Mammary epithelial cell (primary cell): ENCODE measurements at regions of chr1 and their contacts with region 1.

Region 1: DNA sequence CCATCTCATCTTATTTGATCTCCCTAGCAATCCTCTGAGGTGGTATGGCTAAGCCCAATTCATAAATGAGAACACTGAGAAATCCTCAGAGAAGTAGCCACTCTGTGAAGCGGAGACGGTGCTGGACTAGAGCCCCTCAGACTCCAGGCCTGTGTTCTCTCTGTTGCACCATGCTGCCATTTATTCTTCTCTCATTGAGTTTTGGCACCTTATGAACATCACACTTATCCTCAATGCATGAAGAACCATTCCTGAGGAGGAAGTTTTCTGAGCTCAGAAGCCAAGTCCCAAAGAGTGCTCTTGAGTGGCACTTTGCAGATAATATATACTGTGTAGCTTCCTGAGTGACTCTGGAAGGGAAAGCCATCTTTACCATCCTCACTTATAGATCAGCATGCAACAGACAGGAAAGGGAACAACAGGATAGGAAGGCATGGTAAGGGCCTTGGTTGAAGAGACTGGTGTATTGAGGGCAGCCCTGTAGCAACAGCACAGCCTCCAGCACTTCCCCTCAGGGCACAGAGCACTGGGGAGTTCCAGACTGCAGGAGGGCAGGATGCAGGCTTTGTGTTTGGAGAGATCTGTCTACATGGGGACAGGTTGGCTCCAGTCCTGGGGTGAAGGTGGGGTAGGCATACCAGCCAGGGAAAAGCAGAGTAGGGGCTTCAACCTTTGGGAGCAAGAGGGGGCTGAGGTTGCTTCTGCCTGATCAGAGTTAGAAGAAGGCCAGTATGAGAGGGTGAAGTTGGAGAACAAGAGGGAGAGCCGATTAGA is 1.6 kb upstream of the CRNN start:
- DNase-seq: no peak
- H3K4me3 ChIP-seq: no peak overlapping the region
- H3K27ac ChIP-seq: no peak overlapping the region
- H3K4me1 ChIP-seq: no peaks in the 10 kb centered on the region
- H3K27me3 ChIP-seq: peaks cover 11% of the 10 kb centered on the region
- CTCF ChIP-seq: no peak

Region 2: DNA sequence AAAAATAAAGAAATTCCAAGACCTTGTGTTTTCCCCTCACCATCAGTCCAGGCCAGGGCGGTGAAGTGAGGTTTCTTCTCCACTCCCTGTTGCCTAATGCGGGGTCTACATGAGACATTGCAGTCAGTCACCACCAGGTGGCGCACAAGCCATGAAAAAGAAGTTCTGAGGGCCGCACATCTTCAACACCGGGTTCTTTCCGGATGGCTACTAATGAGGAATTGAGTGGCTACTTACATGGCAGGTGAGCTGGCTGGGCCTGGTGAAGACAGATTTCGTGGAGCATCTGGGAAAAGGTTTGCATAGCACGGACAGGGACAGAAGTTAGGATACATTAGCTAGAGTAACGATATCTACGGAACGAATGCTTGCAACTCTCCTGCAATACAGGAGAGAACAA is 363.0 kb before region 1 on chr1:
- CTCF ChIA-PET with region 1: no interaction called
- dilution Hi-C with region 1: no loop called
- in situ Hi-C with region 1: no loop called
- intact Hi-C with region 1: no loop called
- DNase-seq: peak; percentile 71
- H3K4me3 ChIP-seq: no peak overlapping the region
- H3K27ac ChIP-seq: no peak overlapping the region
- H3K4me1 ChIP-seq: peaks cover 47% of the 10 kb centered on the region
- H3K27me3 ChIP-seq: no peaks in the 10 kb centered on the region
- CTCF ChIP-seq: peak; percentile 90

Region 3: GRCh38 chr1:152426731-152427130 is 11.1 kb after region 1 on chr1:
- CTCF ChIA-PET with region 1: no interaction called
- dilution Hi-C with region 1: no loop called
- in situ Hi-C with region 1: no loop called
- intact Hi-C with region 1: loop called (anchors 2 kb)
- DNase-seq: peak; percentile 41
- H3K4me3 ChIP-seq: no peak overlapping the region
- H3K27ac ChIP-seq: no peak overlapping the region
- H3K4me1 ChIP-seq: no peaks in the 10 kb centered on the region
- H3K27me3 ChIP-seq: no peaks in the 10 kb centered on the region
- CTCF ChIP-seq: no peak

Region 4: GRCh38 chr1:152646656-152647055 is 231.0 kb after region 1 on chr1:
- CTCF ChIA-PET with region 1: no interaction called
- dilution Hi-C with region 1: no loop called
- in situ Hi-C with region 1: no loop called
- intact Hi-C with region 1: no loop called
- DNase-seq: no peak
- H3K4me3 ChIP-seq: no peak overlapping the region
- H3K27ac ChIP-seq: no peak overlapping the region
- H3K4me1 ChIP-seq: no peaks in the 10 kb centered on the region
- H3K27me3 ChIP-seq: no peaks in the 10 kb centered on the region
- CTCF ChIP-seq: no peak